Posterior cingulate gyrus (tissue), 11 donors: ENCODE measurements at regions of chr11 and their contacts with region 1.

Region 1: DNA sequence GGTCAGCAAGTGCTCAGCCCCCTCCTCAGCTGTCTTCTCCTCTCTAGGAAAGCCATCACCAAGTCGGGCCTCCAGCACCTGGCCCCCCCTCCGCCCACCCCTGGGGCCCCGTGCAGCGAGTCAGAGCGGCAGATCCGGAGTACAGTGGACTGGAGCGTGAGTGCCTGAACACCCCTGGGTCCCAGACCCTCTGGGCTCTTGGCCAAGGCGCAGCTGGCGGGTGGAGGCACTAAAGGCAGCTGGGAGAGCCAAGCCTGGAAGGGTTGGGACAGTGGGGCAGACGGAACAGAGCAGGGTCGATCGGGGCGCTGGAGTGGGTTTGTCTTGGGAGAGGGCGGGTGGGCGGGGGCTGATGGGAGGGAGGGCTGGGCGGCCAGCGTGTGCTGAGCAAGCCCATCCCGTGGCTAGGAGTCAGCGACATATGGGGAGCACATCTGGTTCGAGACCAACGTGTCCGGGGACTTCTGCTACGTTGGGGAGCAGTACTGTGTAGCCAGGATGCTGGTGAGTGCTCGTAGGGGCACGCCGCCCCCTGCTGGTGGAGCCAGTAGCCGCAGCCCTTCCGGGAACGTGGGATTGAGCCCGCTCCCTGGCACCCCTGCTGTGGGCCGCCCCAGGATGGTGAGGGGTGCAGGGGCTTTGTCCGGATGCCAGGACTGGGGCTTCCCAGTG is 14.1 kb upstream of the MDK start:
- DNase-seq: peak; percentile 50 to 97 (median 80)

Region 2: GRCh38 chr11:46238967-46239800 is 128.2 kb before region 1 on chr11:
- intact Hi-C with region 1: no loop called
- DNase-seq: peak; percentile 74 to 98 (median 82)

Region 3: DNA sequence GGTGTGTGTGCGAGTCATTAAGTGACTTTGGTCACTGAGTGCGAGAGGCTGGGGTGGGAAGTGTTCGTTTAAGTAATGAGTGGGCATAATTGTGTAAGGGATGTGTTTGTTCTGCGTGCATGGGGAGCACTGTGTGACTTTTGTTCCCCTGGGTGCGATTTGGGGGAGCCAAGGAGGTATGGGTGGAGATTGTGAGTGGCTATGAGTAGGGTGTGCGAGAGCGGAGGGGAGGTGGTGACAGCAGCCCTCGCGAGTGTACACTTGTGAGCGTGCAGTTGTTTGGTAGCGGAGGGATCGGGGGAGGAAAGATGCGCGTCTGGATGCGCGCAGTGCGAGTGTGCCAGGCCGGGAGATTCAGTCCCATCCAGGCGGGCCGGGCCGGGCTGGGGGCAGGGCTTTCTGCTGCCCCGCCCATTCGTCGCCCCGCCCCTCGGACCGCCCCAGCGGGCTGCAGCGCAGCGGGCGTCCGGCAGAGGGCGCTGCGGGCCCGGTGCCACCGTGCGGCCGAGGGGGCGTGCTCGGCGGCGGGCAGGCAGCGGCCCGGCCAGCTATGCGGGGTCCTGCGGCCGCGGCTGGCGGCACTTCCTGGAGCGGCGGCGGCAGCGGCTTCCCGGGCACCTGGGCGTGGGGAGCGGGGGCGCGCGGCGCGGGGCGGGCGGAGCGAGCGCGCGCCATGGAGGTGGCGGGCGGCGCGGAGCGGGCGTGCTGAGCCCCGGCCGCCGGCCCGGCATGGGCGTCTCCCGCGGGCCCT is 20.3 kb before region 1 on chr11 and contains the start of gene DGKZ:
- intact Hi-C with region 1: loop called (anchors 1 kb)
- DNase-seq: peak; percentile 73 to 99 (median 89)

Region 4: DNA sequence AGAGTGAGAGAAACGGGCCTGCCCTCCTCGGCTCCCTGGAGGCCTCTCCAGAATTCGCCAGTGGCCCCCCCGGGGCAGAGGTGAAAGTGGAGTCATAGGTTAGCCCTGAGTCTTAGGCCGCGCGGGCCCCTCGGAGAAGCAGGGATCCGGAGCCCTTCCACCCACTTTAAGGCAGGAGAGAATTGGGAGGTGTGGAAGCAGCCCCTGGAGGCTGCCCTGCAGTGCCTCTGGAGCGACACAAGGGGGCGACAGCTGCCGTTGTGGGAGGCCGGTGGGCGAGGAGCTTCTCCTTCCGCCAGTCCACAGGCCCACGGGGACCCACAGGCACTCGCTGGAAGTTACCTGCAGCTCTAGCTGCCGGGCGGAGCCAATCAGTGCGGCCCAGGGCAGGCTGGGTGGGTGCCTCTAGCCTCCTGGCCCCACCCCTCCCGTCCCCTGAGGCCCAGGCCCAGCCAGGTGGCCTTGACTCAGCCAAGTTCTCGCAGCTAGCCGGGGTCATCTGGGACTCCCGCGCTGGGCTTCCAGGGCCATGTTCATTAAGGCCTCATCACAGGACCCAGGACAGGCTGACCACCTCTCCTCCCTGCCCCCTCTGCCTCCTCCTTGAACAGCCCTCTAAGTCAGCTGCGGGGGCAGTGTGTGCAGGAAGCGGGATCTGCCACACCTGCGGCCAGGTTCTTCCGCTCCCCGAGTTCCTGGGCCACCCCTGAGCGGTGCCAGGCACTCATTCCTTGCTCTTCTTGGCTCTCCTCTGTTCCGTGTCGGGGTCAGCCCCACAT is 15.1 kb before region 1 on chr11:
- intact Hi-C with region 1: loop called (anchors 1 kb)
- DNase-seq: peak in 8 of 10 donors; percentile 61 to 96 (median 70)